ENCODE measurements at regions of chr3 and their contacts with region 1.

Region 1: GRCh38 chr3:149812606-149813366 is at the start of gene RNF13:
- DNase-seq: peak; percentile 78
- H3K4me3 ChIP-seq: peak within 1 kb of the TSS; percentile 79
- CTCF ChIP-seq: no peak

Region 2: DNA sequence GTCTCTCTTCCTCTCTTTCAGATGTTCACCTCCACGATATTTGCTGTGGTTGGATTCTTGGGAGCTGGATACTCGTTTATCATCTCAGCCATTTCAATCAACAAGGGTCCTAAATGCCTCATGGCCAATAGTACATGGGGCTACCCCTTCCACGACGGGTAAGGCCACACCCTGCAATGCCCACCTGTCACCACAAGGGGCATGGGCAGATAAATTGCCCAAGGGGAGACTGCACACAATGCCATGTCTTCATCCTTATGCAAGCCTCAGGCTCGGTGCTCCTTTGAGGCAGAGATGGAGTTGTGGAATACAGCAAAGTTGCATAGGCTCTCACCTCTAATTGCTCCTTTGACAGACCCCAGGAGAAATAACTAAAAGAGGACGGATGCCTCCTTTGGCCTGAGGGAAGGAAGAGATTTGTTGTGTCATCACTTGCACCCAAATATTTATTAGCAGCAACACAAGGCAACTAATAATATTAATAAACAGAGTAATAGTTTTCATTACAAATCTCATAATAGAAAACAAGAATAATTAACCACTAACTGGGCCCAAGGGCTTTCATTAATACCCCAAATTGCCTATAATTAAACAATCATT is 325.1 kb before region 1 on chr3:
- CTCF ChIA-PET with region 1: interaction called, 35 read pairs
- POLR2A ChIA-PET with region 1: no interaction called
- DNase-seq: no peak
- H3K4me3 ChIP-seq: no peak overlapping the region
- CTCF ChIP-seq: no peak

Region 3: GRCh38 chr3:149536429-149536828 is 276.4 kb before region 1 on chr3:
- CTCF ChIA-PET with region 1: interaction called, 16 read pairs
- POLR2A ChIA-PET with region 1: no interaction called
- DNase-seq: no peak
- H3K4me3 ChIP-seq: no peak overlapping the region
- CTCF ChIP-seq: no peak

Region 4: GRCh38 chr3:149765762-149766334 is 46.9 kb before region 1 on chr3:
- CTCF ChIA-PET with region 1: interaction called, 369 read pairs
- POLR2A ChIA-PET with region 1: no interaction called
- DNase-seq: no peak
- H3K4me3 ChIP-seq: no peak overlapping the region
- CTCF ChIP-seq: peak; percentile 54

Region 5: GRCh38 chr3:149790268-149790667 is 22.5 kb before region 1 on chr3:
- CTCF ChIA-PET with region 1: interaction called, 12 read pairs
- POLR2A ChIA-PET with region 1: no interaction called
- DNase-seq: no peak
- H3K4me3 ChIP-seq: no peak overlapping the region
- CTCF ChIP-seq: no peak

Measured in AG04449 (cell line).